MCF 10A (cell line): ENCODE measurements at regions of chr19 and their contacts with region 1.

Region 1: DNA sequence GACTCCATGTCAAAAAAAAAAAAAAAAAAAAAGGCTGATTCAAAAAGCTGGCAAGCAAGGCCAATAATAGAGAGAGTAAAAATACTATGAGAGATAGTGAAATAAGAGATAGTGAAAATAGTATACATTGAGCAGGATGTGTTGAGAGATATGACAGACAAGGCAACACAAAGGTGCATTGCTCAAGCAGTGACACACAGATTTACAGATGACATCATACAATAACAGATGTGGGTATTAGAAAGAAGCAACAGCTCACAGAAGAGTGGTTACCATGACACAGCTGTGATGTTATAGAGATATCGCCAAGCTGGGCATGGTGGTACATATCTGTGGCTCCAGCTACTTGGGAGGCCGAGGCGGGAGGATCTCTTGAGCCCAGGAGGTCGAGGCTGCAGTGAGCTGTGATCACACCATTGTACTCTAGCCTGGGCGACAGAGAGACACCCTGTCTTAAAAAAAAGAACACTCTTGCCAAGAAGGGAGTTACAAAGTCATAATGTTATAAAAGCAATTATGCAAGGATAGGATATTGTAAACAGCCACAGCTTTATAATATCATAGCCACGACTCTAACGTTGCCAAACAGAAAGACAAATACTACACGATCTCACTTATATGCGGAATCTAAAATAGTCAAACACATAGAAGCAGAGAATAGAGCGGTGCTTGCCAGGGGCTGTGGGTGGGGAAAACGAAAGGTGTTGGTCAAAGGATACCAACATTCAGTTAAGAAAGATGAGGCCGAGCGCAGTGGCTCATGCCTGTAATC is 10.3 kb downstream of the TNFSF9 start:
- DNase-seq: no peak
- H3K4me3 Mint-ChIP-seq: no peak overlapping the region
- H3K27ac Mint-ChIP-seq: no peak overlapping the region
- H3K4me1 Mint-ChIP-seq: peaks cover 12% of the 10 kb centered on the region
- H3K27me3 Mint-ChIP-seq: no peaks in the 10 kb centered on the region
- CTCF ChIP-seq: no peak

Region 2: GRCh38 chr19:6577476-6578125 is 36.5 kb after region 1 on chr19:
- CTCF ChIA-PET with region 1: no interaction called
- POLR2A ChIA-PET with region 1: interaction called, 13 read pairs
- intact Hi-C with region 1: loop called (anchors 5 kb)
- DNase-seq: peak; percentile 93
- H3K4me3 Mint-ChIP-seq: no peak overlapping the region
- H3K27ac Mint-ChIP-seq: no peak overlapping the region
- H3K4me1 Mint-ChIP-seq: peaks cover 20% of the 10 kb centered on the region
- H3K27me3 Mint-ChIP-seq: no peaks in the 10 kb centered on the region
- CTCF ChIP-seq: no peak